Mammary epithelial cell (primary cell): ENCODE measurements at regions of chr14 and their contacts with region 1.

Region 1: DNA sequence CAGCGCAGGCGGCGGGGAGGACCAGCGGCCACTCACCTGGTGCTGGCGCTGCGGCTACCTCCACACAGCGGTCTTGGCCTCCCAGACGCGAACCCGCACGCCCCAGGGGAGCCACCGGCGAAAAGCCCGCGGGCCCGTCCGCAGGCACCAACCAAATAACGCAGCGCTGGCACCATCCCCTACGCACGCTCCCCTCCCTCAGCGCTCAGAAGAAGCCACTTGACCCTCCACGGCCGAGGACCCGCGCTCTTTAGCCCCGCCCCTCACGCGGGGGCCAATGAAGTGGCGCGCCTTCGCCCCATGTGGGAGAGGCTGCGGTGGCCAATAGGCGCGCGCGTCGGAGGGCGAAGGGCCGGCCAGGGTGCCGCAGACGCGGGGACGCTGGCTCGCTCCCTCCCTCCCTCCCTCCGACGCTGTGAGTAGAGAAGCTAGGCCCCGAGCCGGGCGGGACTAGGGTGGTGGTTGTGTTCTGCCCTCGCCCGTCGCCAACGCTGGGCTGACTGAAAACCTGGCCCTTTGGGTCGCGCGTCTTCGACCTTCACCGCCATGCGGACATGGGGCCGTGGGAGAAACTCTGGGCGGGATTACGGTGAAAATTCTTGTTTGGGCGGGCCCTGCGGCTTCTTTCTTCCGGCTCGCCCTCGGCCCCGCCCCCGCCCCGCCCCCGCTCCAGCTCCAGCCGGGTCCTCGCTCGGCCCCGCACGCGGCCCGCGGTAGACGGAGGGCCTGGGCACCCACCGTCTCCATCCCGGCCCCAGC is at the starts of genes DMAC2L and L2HGDH:
- DNase-seq: peak; percentile 95
- H3K4me3 ChIP-seq: peak within 1 kb of the TSS; percentile 89 to 99 (median 96)
- H3K27ac ChIP-seq: peak within 1 kb of the TSS; percentile 86
- H3K4me1 ChIP-seq: peaks cover 9% of the 10 kb centered on the region
- H3K27me3 ChIP-seq: no peaks in the 10 kb centered on the region
- CTCF ChIP-seq: no peak
- total RNA-seq, gene DMAC2L: 8.7 to 12.9 TPM
- total RNA-seq, gene L2HGDH: 5.2 to 9.4 TPM

Region 2: GRCh38 chr14:50231475-50232275 is 80.5 kb before region 1 on chr14 and contains the start of gene SOS2:
- CTCF ChIA-PET with region 1: no interaction called
- dilution Hi-C with region 1: no loop called
- in situ Hi-C with region 1: no loop called
- intact Hi-C with region 1: loop called (anchors 2 kb)
- DNase-seq: peak; percentile 86
- H3K4me3 ChIP-seq: peak within 1 kb of the TSS; percentile 86 to 93 (median 91)
- H3K27ac ChIP-seq: peak within 1 kb of the TSS; percentile 83
- H3K4me1 ChIP-seq: peaks cover 8% of the 10 kb centered on the region
- H3K27me3 ChIP-seq: no peaks in the 10 kb centered on the region
- CTCF ChIP-seq: peak in 1 of 2 donors; percentile 10
- total RNA-seq, gene SOS2: 19.6 to 35.2 TPM